Left ventricle myocardium superior (tissue), 1 donor: ENCODE measurements at regions of chr20 and their contacts with region 1.

Region 1: GRCh38 chr20:1313236-1313964 is 15.5 kb downstream of the SDCBP2 start:
- DNase-seq: peak; percentile 86
- ATAC-seq: peak; percentile 95

Region 2: DNA sequence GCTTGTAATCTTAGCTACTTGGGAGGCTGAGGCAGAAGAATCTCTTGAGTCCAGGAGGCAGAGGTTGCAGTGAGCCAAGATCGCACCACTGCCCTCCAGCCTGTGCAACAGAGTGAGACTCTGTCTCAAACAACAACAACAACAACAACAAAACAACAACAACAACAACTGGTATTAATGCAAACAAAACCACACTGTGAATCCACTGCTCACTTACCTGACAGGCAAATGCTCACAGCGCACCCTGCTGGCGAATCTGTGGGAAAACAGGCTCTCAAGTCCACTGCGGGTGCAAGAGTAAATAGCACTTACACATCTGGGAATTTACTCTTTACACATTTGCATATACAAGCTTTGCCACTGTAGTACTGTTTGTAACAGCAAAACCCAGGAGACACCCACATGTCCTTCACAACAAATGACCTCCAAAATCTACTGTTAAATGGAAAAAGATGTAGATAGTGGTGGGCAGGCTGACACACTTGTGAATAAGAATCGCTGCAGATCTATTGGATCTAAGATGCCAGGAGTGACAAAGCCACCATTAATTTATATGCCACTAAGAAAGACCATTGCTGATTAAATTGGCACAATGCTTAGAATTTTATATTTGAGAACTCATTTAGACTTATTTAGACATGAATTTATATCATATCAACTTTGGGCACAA is 124.0 kb after region 1 on chr20:
- intact Hi-C with region 1: loop called (anchors 2 kb)
- DNase-seq: peak; percentile 74
- ATAC-seq: peak; percentile 78